ENCODE measurements at regions of chr9 and their contacts with region 1.

Region 1: GRCh38 chr9:92234514-92234913 is 59.0 kb downstream of the IARS1 start:
- DNase-seq: no peak
- ATAC-seq: peak in 1 of 4 donors; percentile 38
- H3K4me3 ChIP-seq: no peak overlapping the region
- H3K27ac ChIP-seq: no peak overlapping the region
- H3K4me1 ChIP-seq: no peaks in the 10 kb centered on the region
- H3K27me3 ChIP-seq: no peaks in the 10 kb centered on the region
- CTCF ChIP-seq: no peak

Region 2: GRCh38 chr9:92266486-92266885 is 32.0 kb after region 1 on chr9:
- intact Hi-C with region 1: loop called in 1 of 2 experiments (anchors 5 kb)
- DNase-seq: no peak
- ATAC-seq: no peak
- H3K4me3 ChIP-seq: no peak overlapping the region
- H3K27ac ChIP-seq: no peak overlapping the region
- H3K4me1 ChIP-seq: no peaks in the 10 kb centered on the region
- H3K27me3 ChIP-seq: no peaks in the 10 kb centered on the region
- CTCF ChIP-seq: no peak

Region 3: GRCh38 chr9:92986176-92987085 is 751.9 kb after region 1 on chr9:
- intact Hi-C with region 1: loop called in 1 of 2 experiments (anchors 5 kb)
- DNase-seq: no peak
- ATAC-seq: no peak
- H3K4me3 ChIP-seq: no peak overlapping the region
- H3K27ac ChIP-seq: no peak overlapping the region
- H3K4me1 ChIP-seq: no peaks in the 10 kb centered on the region
- H3K27me3 ChIP-seq: no peaks in the 10 kb centered on the region
- CTCF ChIP-seq: peak; percentile 35